ENCODE measurements at regions of chr14 and their contacts with region 1.

Region 1: GRCh38 chr14:75577729-75578101 is 705 bp upstream of the FLVCR2 start:
- DNase-seq: peak; percentile 74 to 82 (median 81)
- H3K4me3 ChIP-seq: peak overlapping the region; percentile 48 to 86 (median 74)
- H3K27ac ChIP-seq: no peak overlapping the region
- H3K4me1 ChIP-seq: peaks cover 0 to 15% (median 14%) of the 10 kb centered on the region in 4 experiments
- H3K27me3 ChIP-seq: peaks cover 0 to 3% (median 0%) of the 10 kb centered on the region in 5 experiments

Region 2: GRCh38 chr14:75340921-75341320 is 236.8 kb before region 1 on chr14:
- CTCF ChIA-PET with region 1: no interaction called
- POLR2A ChIA-PET with region 1: no interaction called
- DNase-seq: peak; percentile 29 to 62 (median 56)
- H3K4me3 ChIP-seq: peak overlapping the region in 4 of 7 experiments; percentile 33 to 35 (median 34)
- H3K27ac ChIP-seq: peak overlapping the region; percentile 36 to 40
- H3K4me1 ChIP-seq: peaks cover 22 to 58% (median 26%) of the 10 kb centered on the region in 4 experiments
- H3K27me3 ChIP-seq: no peaks in the 10 kb centered on the region

Region 3: DNA sequence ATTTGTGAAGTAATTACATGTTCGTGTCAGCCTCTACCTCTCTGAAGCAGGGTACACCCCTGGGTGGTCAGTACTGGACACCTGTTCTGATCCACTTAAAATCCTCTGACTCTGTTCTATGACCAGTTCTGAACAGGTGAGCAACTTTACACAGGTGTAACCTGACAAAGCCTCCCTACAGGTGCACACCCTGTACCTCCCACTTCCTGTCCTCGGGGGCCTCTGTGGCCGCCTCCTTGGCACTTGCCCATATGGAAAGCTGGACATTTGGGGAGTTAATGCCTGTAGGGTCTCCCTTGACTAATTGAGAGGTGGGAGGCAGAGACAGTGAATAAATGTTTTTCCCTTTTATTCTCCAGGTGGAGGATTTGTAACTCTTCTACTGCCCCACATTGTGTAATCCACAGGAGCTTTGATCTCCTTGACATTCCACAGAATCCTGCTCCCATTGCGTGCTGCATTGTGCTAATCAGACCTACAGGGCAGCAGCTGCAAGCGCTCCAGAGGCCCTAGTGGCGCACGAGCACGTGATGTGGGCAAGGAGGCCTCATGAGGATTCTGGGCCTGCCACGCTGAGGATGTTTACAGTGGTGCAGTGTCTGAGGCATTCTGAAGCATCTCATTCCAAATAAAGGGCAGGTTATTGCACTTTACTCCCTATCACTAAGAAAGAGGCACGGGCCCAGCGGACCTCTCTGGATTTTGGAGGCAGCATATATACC is 101.3 kb before region 1 on chr14:
- CTCF ChIA-PET with region 1: no interaction called
- POLR2A ChIA-PET with region 1: no interaction called
- DNase-seq: no peak
- H3K4me3 ChIP-seq: no peak overlapping the region
- H3K27ac ChIP-seq: no peak overlapping the region
- H3K4me1 ChIP-seq: peaks cover 0 to 7% (median 0%) of the 10 kb centered on the region in 4 experiments
- H3K27me3 ChIP-seq: no peaks in the 10 kb centered on the region

Region 4: DNA sequence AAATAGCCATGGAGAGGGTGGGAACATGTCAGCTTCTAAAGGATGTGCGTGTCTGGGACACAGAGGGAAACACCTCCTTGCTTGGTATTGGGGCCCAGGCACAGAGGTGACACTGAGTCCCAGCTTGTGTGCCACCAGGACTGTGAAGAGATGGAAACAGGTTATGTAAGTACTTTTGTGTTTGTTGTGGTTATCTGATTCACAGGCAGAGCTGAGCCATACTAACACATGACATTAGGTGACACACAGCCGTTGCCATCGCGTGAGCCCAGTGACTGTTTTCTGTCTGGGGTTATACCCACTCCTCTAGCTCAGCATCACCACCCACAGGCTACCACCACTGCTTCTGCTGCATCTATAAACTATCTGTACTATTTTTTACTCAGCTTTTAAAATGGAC is 11.4 kb before region 1 on chr14:
- CTCF ChIA-PET with region 1: interaction called, 66 read pairs
- POLR2A ChIA-PET with region 1: interaction called, 4 read pairs
- DNase-seq: peak in 2 of 3 donors; percentile 74 to 86
- H3K4me3 ChIP-seq: no peak overlapping the region
- H3K27ac ChIP-seq: no peak overlapping the region
- H3K4me1 ChIP-seq: peaks cover 2 to 16% (median 12%) of the 10 kb centered on the region in 4 experiments
- H3K27me3 ChIP-seq: no peaks in the 10 kb centered on the region

Region 5: GRCh38 chr14:75647650-75648049 is 69.9 kb after region 1 on chr14:
- CTCF ChIA-PET with region 1: interaction called, 221 read pairs
- POLR2A ChIA-PET with region 1: no interaction called
- DNase-seq: no peak
- H3K4me3 ChIP-seq: no peak overlapping the region
- H3K27ac ChIP-seq: no peak overlapping the region
- H3K4me1 ChIP-seq: no peaks in the 10 kb centered on the region
- H3K27me3 ChIP-seq: no peaks in the 10 kb centered on the region

Region 6: DNA sequence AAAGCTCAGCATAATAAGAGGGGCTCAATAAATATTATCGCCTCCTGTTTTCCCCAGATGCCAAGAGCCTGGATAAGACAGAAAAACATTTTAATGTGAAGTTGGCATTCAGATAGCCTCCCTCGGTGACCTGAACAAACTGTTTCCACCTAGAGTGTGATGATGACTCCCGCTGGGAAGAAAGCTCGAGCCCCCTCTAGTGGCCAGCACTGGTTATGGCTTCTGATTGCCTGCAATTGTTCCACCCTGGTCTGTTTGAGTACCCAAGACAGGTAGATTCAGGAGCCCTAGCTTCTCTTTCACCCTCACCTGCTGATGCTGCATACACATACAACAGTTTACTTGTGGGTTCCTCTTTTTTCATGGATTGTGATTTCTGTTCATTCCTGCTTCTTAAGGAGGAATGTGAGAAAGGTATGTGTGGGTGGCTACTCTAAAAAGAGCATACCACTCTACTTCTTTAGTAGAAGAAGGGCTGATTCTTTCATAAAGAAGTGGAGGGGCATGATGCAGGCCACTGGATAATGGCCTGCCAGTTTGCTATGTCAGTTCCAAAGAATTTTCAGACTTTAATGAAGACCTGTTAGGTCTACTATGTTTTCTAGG is 76.5 kb after region 1 on chr14:
- CTCF ChIA-PET with region 1: interaction called, 221 read pairs
- POLR2A ChIA-PET with region 1: interaction called, 3 read pairs
- DNase-seq: peak; percentile 61 to 81 (median 72)
- H3K4me3 ChIP-seq: no peak overlapping the region
- H3K27ac ChIP-seq: no peak overlapping the region
- H3K4me1 ChIP-seq: peaks cover 0 to 8% (median under 1%) of the 10 kb centered on the region in 4 experiments
- H3K27me3 ChIP-seq: no peaks in the 10 kb centered on the region

Region 7: GRCh38 chr14:75660630-75661494 is 83.1 kb after region 1 on chr14 and contains the starts of genes ERG28 and TTLL5:
- CTCF ChIA-PET with region 1: interaction called, 221 read pairs
- POLR2A ChIA-PET with region 1: no interaction called
- DNase-seq: peak; percentile 98 to 99 (median 99)
- H3K4me3 ChIP-seq: peak within 1 kb of the TSS; percentile 94 to 100 (median 98)
- H3K27ac ChIP-seq: peak within 1 kb of the TSS; percentile 88 to 95
- H3K4me1 ChIP-seq: peaks cover 10 to 20% (median 15%) of the 10 kb centered on the region in 4 experiments
- H3K27me3 ChIP-seq: no peaks in the 10 kb centered on the region

Region 8: GRCh38 chr14:76236172-76237130 is 658.7 kb after region 1 on chr14:
- CTCF ChIA-PET with region 1: no interaction called
- POLR2A ChIA-PET with region 1: no interaction called
- DNase-seq: peak in 2 of 3 donors; percentile 12 to 13
- H3K4me3 ChIP-seq: no peak overlapping the region
- H3K27ac ChIP-seq: no peak overlapping the region
- H3K4me1 ChIP-seq: no peaks in the 10 kb centered on the region
- H3K27me3 ChIP-seq: no peaks in the 10 kb centered on the region